ENCODE measurements at regions of chr1 and their contacts with region 1.

Region 1: GRCh38 chr1:61708953-61709907 is 15.7 kb downstream of the TM2D1 start:
- DNase-seq: no peak
- ATAC-seq: no peak
- H3K4me3 ChIP-seq: no peak overlapping the region
- H3K4me3 Mint-ChIP-seq: no peak overlapping the region
- H3K27ac ChIP-seq: no peak overlapping the region
- H3K27ac Mint-ChIP-seq: no peak overlapping the region
- H3K4me1 ChIP-seq: no peaks in the 10 kb centered on the region
- H3K4me1 Mint-ChIP-seq: peaks cover 13% of the 10 kb centered on the region
- H3K27me3 ChIP-seq: no peaks in the 10 kb centered on the region
- H3K27me3 Mint-ChIP-seq: no peaks in the 10 kb centered on the region
- CTCF ChIP-seq: no peak

Region 2: GRCh38 chr1:60589916-60590315 is 1119.3 kb before region 1 on chr1:
- CTCF ChIA-PET with region 1: no interaction called
- POLR2A ChIA-PET with region 1: no interaction called
- intact Hi-C with region 1: no loop called
- DNase-seq: no peak
- ATAC-seq: no peak
- H3K4me3 ChIP-seq: no peak overlapping the region
- H3K4me3 Mint-ChIP-seq: no peak overlapping the region
- H3K27ac ChIP-seq: no peak overlapping the region
- H3K27ac Mint-ChIP-seq: no peak overlapping the region
- H3K4me1 ChIP-seq: no peaks in the 10 kb centered on the region
- H3K4me1 Mint-ChIP-seq: no peaks in the 10 kb centered on the region
- H3K27me3 ChIP-seq: no peaks in the 10 kb centered on the region
- H3K27me3 Mint-ChIP-seq: no peaks in the 10 kb centered on the region
- CTCF ChIP-seq: no peak

Region 3: GRCh38 chr1:61732726-61733125 is 23.5 kb after region 1 on chr1:
- CTCF ChIA-PET with region 1: no interaction called
- POLR2A ChIA-PET with region 1: no interaction called
- intact Hi-C with region 1: no loop called
- DNase-seq: no peak
- ATAC-seq: no peak
- H3K4me3 ChIP-seq: no peak overlapping the region
- H3K4me3 Mint-ChIP-seq: no peak overlapping the region
- H3K27ac ChIP-seq: no peak overlapping the region
- H3K27ac Mint-ChIP-seq: no peak overlapping the region
- H3K4me1 ChIP-seq: peaks cover 12% of the 10 kb centered on the region
- H3K4me1 Mint-ChIP-seq: peaks cover 8% of the 10 kb centered on the region
- H3K27me3 ChIP-seq: no peaks in the 10 kb centered on the region
- H3K27me3 Mint-ChIP-seq: no peaks in the 10 kb centered on the region
- CTCF ChIP-seq: no peak

Region 4: DNA sequence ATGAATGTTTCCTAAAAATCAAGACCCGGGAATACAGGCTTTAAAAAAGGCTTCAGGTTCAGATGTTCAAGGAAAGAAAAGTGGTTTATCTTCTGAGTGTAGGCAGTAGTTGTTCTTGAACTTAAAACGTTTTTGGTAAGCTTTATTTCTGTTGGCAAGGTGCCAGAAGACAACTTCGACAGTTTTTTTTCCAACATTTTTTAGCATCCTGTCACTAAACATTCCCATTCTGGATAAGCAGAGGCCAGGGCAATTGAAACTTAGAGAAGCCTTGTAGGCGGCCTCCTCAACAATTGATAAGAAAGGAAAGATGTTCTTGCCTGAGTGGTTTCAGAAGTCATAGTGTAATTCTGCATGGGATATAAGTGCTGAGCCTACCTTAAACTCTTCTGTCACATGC is 99.7 kb after region 1 on chr1:
- CTCF ChIA-PET with region 1: no interaction called
- POLR2A ChIA-PET with region 1: no interaction called
- intact Hi-C with region 1: loop called in 1 of 2 experiments (anchors 5 kb)
- DNase-seq: no peak
- ATAC-seq: no peak
- H3K4me3 ChIP-seq: no peak overlapping the region
- H3K4me3 Mint-ChIP-seq: no peak overlapping the region
- H3K27ac ChIP-seq: no peak overlapping the region
- H3K27ac Mint-ChIP-seq: no peak overlapping the region
- H3K4me1 ChIP-seq: no peaks in the 10 kb centered on the region
- H3K4me1 Mint-ChIP-seq: no peaks in the 10 kb centered on the region
- H3K27me3 ChIP-seq: no peaks in the 10 kb centered on the region
- H3K27me3 Mint-ChIP-seq: no peaks in the 10 kb centered on the region
- CTCF ChIP-seq: no peak

Region 5: DNA sequence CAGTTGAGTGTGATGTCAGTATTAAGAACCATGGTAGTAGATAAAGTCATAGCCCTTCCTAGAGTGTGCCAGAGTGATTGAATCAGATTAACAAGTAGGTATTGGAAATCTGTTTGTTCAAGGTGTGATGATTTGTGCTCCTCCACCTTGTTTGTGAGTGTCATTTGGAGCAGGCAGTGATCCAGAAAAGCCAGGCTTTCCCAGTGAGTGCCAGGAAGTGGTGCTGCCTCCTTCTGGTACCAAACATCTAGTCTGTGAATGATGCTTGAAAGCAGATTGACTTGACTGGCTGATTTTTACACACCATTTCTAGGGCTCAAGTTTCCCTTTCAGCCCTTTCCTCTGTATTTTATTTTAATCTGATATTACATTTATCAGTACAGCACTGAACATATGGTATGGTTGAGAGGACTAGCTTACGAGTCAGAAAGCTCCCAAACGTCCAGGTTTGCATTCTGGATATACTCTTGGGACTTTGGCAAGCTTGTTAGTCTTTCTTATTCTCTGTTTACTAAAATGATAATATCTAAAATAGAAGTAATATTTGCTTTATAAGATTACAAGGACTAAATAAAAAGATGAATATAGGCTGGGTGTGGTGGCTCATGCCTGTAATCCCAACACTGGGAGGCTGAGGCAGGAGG is 133.8 kb after region 1 on chr1:
- CTCF ChIA-PET with region 1: no interaction called
- POLR2A ChIA-PET with region 1: no interaction called
- intact Hi-C with region 1: loop called in 1 of 2 experiments (anchors 10 kb)
- DNase-seq: no peak
- ATAC-seq: no peak
- H3K4me3 ChIP-seq: no peak overlapping the region
- H3K4me3 Mint-ChIP-seq: no peak overlapping the region
- H3K27ac ChIP-seq: no peak overlapping the region
- H3K27ac Mint-ChIP-seq: peak overlapping the region; percentile 11
- H3K4me1 ChIP-seq: no peaks in the 10 kb centered on the region
- H3K4me1 Mint-ChIP-seq: peaks cover 4% of the 10 kb centered on the region
- H3K27me3 ChIP-seq: no peaks in the 10 kb centered on the region
- H3K27me3 Mint-ChIP-seq: no peaks in the 10 kb centered on the region
- CTCF ChIP-seq: no peak